GM12878 (cell line): ENCODE measurements at regions of chr7 and their contacts with region 1.

Region 1: DNA sequence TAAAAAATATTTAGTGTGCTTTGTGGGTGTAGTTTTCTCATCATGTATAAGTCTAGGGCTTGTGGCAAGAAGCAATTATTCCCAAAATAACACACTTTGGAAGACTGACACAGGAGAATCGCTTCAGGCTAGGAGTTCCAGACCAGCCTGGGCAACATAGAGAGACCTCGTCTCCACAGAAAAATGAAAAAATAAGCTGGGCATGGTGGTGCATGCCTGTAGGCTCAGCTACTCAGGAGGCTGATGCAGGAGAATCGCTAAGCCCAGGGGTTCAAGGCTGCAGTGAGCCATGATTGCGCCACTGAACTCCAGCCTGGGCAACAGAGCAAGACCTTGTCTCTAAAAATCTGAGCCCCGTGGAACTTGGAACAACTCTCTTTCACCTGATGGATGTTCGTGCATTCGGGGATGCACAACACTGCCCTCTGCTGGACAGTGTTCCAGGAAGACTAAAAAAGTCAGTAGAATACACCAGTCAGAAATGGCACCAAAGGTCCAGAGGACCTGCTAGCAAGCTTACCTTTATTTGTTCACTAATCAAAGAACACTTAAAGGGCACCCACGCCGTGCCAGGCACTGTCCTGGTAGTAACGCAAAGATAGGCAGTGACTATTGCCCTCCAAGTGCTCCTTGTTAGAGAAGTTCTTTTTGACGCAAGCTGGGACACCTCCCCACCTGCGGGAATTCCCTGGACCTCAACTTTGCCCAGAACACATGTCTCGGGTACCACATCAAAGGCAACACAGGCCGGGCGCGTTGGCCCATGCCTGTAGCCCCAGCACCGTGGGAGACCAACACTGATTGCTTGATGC is 81.9 kb upstream of the CALN1 start:
- DNase-seq: peak; percentile 38
- ATAC-seq: peak; percentile 82
- H3K4me3 ChIP-seq: no peak overlapping the region
- H3K27ac ChIP-seq: no peak overlapping the region
- H3K4me1 ChIP-seq: 0 out of 2 replicates have a peak, but pooled peaks cover 3% of the 10 kb centered on the region
- H3K27me3 ChIP-seq: no peaks in the 10 kb centered on the region
- CTCF ChIP-seq: peak; percentile 54 to 70 (median 59)
- EP300 ChIP-seq: no peak
- POLR2A ChIP-seq: no peak
- RAD21 ChIP-seq: peak; percentile 70

Region 2: DNA sequence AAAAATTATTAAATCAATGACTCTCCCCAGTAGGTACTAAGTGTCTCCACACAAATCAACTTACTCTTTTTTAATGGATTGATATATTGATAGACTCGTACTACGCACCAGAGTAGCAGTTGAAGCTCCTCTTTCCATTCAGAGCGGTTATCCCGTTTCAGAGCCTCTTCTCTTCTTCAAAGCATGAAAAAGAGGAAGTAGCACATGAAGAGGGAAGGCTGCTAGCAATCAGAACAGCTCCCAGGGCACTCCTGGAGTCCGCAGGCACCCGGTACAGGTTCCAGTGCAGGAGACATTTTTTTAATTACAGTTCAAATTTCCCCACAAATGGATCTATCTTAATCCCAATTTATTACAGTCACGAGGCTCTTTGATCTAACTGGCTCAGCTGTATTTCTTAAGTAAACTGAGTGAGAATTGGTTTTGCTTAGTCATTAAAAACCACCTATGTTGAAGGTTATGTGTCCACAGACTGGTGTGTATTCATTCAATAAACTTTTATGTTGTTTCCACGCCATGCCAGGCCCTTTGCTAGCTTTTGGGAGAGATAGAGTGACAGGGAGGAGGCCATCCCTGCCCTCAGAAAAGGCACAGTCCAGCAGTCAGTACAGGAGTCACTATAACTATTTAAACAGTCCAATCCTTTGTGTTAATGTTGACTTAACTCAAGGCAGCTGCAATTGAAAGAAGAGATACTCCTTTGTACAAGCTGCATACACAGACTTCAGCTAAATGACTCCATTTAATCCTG is 49.9 kb before region 1 on chr7:
- CTCF ChIA-PET with region 1: interaction called, 3 read pairs
- POLR2A ChIA-PET with region 1: no interaction called
- RAD21 ChIA-PET with region 1: no interaction called
- SMC1A ChIA-PET with region 1: no interaction called
- in situ Hi-C with region 1: no loop called
- intact Hi-C with region 1: loop called (anchors 5 kb)
- DNase-seq: no peak
- ATAC-seq: peak; percentile 44; the same call in 2 of the 3 replicates
- H3K4me3 ChIP-seq: no peak overlapping the region
- H3K27ac ChIP-seq: no peak overlapping the region
- H3K4me1 ChIP-seq: no peaks in the 10 kb centered on the region
- H3K27me3 ChIP-seq: no peaks in the 10 kb centered on the region
- CTCF ChIP-seq: no peak
- EP300 ChIP-seq: no peak
- POLR2A ChIP-seq: no peak
- RAD21 ChIP-seq: no peak

Region 3: DNA sequence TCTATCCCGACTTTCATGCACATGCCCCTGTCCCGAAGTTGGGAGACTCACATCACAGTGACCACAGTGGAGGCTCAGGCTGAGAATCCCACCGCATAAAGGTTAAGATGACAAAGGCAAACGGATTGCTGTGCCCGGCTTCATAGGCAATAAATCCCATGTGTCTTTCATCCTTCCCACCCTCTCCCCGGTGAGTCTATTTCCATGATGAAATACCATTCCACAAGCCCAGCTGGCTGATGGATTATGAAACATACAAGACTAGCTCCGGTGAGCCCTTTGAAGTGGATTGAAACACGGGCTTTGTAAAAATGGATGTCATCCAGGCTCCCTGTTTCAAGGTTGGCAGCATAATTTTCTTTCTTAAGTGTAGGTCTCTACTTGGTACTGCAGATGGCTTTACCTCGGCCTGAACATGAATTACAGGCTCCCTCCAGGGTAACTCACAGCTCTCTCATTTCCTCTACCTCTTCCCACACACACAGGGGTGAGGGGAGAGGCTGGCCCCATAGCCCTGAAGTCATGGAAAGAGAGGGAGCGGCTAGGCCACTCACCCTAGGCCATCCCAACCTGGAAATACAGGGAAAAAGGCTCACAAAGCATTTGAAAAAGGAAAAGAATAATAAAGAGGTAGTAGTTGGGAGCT is 10.1 kb after region 1 on chr7:
- CTCF ChIA-PET with region 1: interaction called, 11 read pairs
- POLR2A ChIA-PET with region 1: no interaction called
- RAD21 ChIA-PET with region 1: no interaction called
- SMC1A ChIA-PET with region 1: interaction called, 4 read pairs
- in situ Hi-C with region 1: no loop called
- intact Hi-C with region 1: no loop called
- DNase-seq: no peak
- ATAC-seq: no peak
- H3K4me3 ChIP-seq: no peak overlapping the region
- H3K27ac ChIP-seq: no peak overlapping the region
- H3K4me1 ChIP-seq: no peaks in the 10 kb centered on the region
- H3K27me3 ChIP-seq: no peaks in the 10 kb centered on the region
- CTCF ChIP-seq: no peak
- EP300 ChIP-seq: no peak
- POLR2A ChIP-seq: no peak
- RAD21 ChIP-seq: no peak

Region 4: DNA sequence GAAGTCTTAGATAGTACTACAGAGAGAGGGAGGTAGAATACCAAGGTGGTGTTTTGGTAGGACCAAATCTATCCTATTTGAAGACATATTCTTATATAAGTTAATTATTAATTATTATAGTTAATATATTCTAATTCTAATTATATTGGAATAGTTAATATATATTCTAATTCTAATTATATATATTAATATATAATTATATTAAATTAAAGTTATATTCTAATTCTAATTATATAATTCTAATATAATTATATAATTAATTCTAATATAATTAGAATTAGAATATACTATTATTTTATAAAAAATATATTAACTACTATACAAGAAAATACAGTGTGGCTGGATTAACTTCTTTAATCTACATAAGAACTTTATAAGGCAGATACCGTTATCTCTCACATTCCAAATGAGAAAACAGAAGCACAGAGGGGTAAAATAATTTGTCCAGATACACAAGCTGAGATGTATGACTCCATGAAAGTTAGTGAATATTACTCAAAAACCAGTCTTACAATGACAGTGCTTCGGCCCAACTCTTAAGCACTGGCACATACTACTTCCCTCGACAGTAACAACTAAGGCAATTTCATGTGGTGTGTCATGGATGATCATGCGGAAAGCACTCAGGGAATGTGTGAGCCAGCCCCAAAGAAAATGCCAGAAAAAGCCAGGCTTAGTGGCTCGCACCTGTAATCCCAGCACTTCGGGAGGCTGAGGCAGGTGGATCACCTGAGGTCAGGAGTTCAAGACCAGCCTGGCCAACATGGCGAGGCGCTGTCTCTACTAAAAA is 291.3 kb after region 1 on chr7:
- CTCF ChIA-PET with region 1: interaction called, 8 read pairs
- POLR2A ChIA-PET with region 1: interaction called, 3 read pairs
- RAD21 ChIA-PET with region 1: interaction called, 4 read pairs
- SMC1A ChIA-PET with region 1: no interaction called
- in situ Hi-C with region 1: no loop called
- intact Hi-C with region 1: loop called (anchors 10 kb)
- DNase-seq: no peak
- ATAC-seq: no peak
- H3K4me3 ChIP-seq: no peak overlapping the region
- H3K27ac ChIP-seq: no peak overlapping the region
- H3K4me1 ChIP-seq: no peaks in the 10 kb centered on the region
- H3K27me3 ChIP-seq: no peaks in the 10 kb centered on the region
- CTCF ChIP-seq: no peak
- EP300 ChIP-seq: no peak
- POLR2A ChIP-seq: no peak
- RAD21 ChIP-seq: no peak